Left lung (tissue), 14 donors: ENCODE measurements at regions of chr9 and their contacts with region 1.

Region 1: GRCh38 chr9:129610473-129611301 is 10.2 kb downstream of the C9orf50 start:
- DNase-seq: peak; percentile 76 to 94 (median 82)
- ATAC-seq: peak; percentile 77
- H3K4me3 ChIP-seq: peak overlapping the region; percentile 51 to 56
- H3K27ac ChIP-seq: peak overlapping the region; percentile 82 to 85
- H3K4me1 ChIP-seq: peaks cover 15 to 45% of the 10 kb centered on the region in 2 donors
- H3K27me3 ChIP-seq: peaks cover 0 to 11% of the 10 kb centered on the region in 2 donors
- CTCF ChIP-seq: peak; percentile 93 to 97

Region 2: DNA sequence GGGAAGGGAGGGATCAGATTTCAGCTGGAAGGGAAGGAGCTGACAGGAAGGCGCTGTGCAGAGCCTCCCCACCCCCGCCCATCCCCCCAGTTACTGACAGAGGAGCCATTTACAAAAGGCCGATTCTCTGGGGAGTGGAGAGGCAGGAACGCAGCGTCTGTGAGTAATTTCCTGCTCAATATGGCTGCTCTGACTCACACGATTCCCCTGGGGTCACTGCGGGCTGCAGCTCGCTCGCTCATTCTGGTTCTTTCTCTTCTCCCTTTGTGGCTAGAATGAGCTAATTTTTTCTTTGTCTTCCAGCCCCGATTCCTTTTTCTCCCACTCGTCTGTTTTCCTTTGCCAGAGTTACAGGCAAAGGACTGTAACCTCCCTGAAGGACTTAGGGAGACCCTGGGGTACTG is 470.7 kb before region 1 on chr9:
- intact Hi-C with region 1: loop called (anchors 5 to 10 kb)
- DNase-seq: peak in 3 of 4 donors; percentile 89 to 99 (median 97)
- ATAC-seq: peak; percentile 78
- H3K4me3 ChIP-seq: peak overlapping the region; percentile 32 to 50
- H3K27ac ChIP-seq: peak overlapping the region; percentile 99 to 100
- H3K4me1 ChIP-seq: peaks cover 57 to 76% of the 10 kb centered on the region in 2 donors
- H3K27me3 ChIP-seq: no peaks in the 10 kb centered on the region
- CTCF ChIP-seq: no peak

Region 3: GRCh38 chr9:129177791-129178559 is 432.7 kb before region 1 on chr9 and contains the start of gene IER5L:
- intact Hi-C with region 1: loop called in 1 of 2 experiments (anchors 10 kb)
- DNase-seq: peak; percentile 94 to 97 (median 96)
- ATAC-seq: peak; percentile 73
- H3K4me3 ChIP-seq: peak within 1 kb of the TSS; percentile 87 to 93
- H3K27ac ChIP-seq: peak within 1 kb of the TSS; percentile 93 to 100
- H3K4me1 ChIP-seq: peaks cover 6 to 40% of the 10 kb centered on the region in 2 donors
- H3K27me3 ChIP-seq: peaks cover 0 to 19% of the 10 kb centered on the region in 2 donors
- CTCF ChIP-seq: no peak
- polyA plus RNA-seq, gene IER5L: 5.7 to 9.6 (median 7.2) TPM

Region 4: GRCh38 chr9:129495534-129496325 is 115.0 kb before region 1 on chr9:
- intact Hi-C with region 1: loop called in 1 of 2 experiments (anchors 5 kb)
- DNase-seq: peak; percentile 89 to 96 (median 94)
- ATAC-seq: peak; percentile 81
- H3K4me3 ChIP-seq: peak overlapping the region; percentile 47 to 59
- H3K27ac ChIP-seq: peak overlapping the region; percentile 94 to 99
- H3K4me1 ChIP-seq: peaks cover 42 to 75% of the 10 kb centered on the region in 2 donors
- H3K27me3 ChIP-seq: no peaks in the 10 kb centered on the region
- CTCF ChIP-seq: no peak

Region 5: GRCh38 chr9:129549685-129550084 is 61.0 kb before region 1 on chr9:
- intact Hi-C with region 1: loop called in 1 of 2 experiments (anchors 10 kb)
- DNase-seq: peak in 1 of 4 donors; percentile 77
- ATAC-seq: peak; percentile 53
- H3K4me3 ChIP-seq: peak overlapping the region; percentile 22 to 44
- H3K27ac ChIP-seq: peak overlapping the region; percentile 67 to 81
- H3K4me1 ChIP-seq: peaks cover 4 to 28% of the 10 kb centered on the region in 2 donors
- H3K27me3 ChIP-seq: peaks cover 0 to 21% of the 10 kb centered on the region in 2 donors
- CTCF ChIP-seq: no peak